A549 (cell line): ENCODE measurements at regions of chr17 and their contacts with region 1.

Region 1: GRCh38 chr17:46044286-46044928 is 45.4 kb downstream of the STH start:
- DNase-seq: peak; percentile 81 to 93
- ATAC-seq: peak; percentile 91 to 96
- H3K4me3 ChIP-seq: no peak overlapping the region
- H3K27ac ChIP-seq: peak overlapping the region; percentile 7 to 45; a peak in 3 of 6 replicates
- H3K4me1 ChIP-seq: peaks cover 23% of the 10 kb centered on the region
- CTCF ChIP-seq: peak; percentile 99
- EP300 ChIP-seq: no peak
- POLR2A ChIP-seq: no peak
- RAD21 ChIP-seq: peak; percentile 89 to 91

Region 2: GRCh38 chr17:45965812-45966211 is 78.6 kb before region 1 on chr17:
- CTCF ChIA-PET with region 1: no interaction called
- POLR2A ChIA-PET with region 1: no interaction called
- DNase-seq: no peak
- ATAC-seq: no peak
- H3K4me3 ChIP-seq: no peak overlapping the region
- H3K27ac ChIP-seq: no peak overlapping the region
- H3K4me1 ChIP-seq: no peaks in the 10 kb centered on the region
- CTCF ChIP-seq: no peak
- EP300 ChIP-seq: no peak
- POLR2A ChIP-seq: no peak
- RAD21 ChIP-seq: no peak

Region 3: GRCh38 chr17:46002311-46002972 is 42.0 kb before region 1 on chr17:
- CTCF ChIA-PET with region 1: interaction called, 27 read pairs
- POLR2A ChIA-PET with region 1: no interaction called
- DNase-seq: peak; percentile 69 to 78
- ATAC-seq: peak; percentile 89 to 91
- H3K4me3 ChIP-seq: no peak overlapping the region
- H3K27ac ChIP-seq: peak overlapping the region in 1 of 2 experiments; percentile 61; a peak in 3 of 6 replicates
- H3K4me1 ChIP-seq: peaks cover 15% of the 10 kb centered on the region
- CTCF ChIP-seq: peak; percentile 93
- EP300 ChIP-seq: no peak
- POLR2A ChIP-seq: no peak
- RAD21 ChIP-seq: peak; percentile 96 to 97

Region 4: DNA sequence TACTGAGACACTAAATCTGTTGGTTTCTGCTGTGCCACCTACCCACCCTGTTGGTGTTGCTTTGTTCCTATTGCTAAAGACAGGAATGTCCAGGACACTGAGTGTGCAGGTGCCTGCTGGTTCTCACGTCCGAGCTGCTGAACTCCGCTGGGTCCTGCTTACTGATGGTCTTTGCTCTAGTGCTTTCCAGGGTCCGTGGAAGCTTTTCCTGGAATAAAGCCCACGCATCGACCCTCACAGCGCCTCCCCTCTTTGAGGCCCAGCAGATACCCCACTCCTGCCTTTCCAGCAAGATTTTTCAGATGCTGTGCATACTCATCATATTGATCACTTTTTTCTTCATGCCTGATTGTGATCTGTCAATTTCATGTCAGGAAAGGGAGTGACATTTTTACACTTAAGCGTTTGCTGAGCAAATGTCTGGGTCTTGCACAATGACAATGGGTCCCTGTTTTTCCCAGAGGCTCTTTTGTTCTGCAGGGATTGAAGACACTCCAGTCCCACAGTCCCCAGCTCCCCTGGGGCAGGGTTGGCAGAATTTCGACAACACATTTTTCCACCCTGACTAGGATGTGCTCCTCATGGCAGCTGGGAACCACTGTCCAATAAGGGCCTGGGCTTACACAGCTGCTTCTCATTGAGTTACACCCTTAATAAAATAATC is 30.8 kb before region 1 on chr17:
- CTCF ChIA-PET with region 1: interaction called, 19 read pairs
- POLR2A ChIA-PET with region 1: no interaction called
- DNase-seq: no peak
- ATAC-seq: no peak
- H3K4me3 ChIP-seq: no peak overlapping the region
- H3K27ac ChIP-seq: no peak overlapping the region
- H3K4me1 ChIP-seq: peaks cover 8% of the 10 kb centered on the region; the same call in 2 of the 3 replicates
- CTCF ChIP-seq: no peak
- EP300 ChIP-seq: no peak
- POLR2A ChIP-seq: no peak
- RAD21 ChIP-seq: no peak

Region 5: DNA sequence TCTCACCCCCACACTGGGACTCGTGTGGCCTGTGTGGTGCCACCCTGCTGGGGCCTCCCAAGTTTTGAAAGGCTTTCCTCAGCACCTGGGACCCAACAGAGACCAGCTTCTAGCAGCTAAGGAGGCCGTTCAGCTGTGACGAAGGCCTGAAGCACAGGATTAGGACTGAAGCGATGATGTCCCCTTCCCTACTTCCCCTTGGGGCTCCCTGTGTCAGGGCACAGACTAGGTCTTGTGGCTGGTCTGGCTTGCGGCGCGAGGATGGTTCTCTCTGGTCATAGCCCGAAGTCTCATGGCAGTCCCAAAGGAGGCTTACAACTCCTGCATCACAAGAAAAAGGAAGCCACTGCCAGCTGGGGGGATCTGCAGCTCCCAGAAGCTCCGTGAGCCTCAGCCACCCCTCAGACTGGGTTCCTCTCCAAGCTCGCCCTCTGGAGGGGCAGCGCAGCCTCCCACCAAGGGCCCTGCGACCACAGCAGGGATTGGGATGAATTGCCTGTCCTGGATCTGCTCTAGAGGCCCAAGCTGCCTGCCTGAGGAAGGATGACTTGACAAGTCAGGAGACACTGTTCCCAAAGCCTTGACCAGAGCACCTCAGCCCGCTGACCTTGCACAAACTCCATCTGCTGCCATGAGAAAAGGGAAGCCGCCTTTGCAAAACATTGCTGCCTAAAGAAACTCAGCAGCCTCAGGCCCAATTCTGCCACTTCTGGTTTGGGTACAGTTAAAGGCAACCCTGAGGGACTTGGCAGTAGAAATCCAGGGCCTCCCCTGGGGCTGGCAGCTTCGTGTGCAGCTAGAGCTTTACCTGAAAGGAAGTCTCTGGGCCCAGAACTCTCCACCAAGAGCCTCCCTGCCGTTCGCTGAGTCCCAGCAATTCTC is 18.0 kb before region 1 on chr17:
- CTCF ChIA-PET with region 1: interaction called, 55 read pairs
- POLR2A ChIA-PET with region 1: no interaction called
- DNase-seq: no peak
- ATAC-seq: peak; percentile 14 to 21; a peak in 3 of 6 replicates
- H3K4me3 ChIP-seq: no peak overlapping the region
- H3K27ac ChIP-seq: no peak overlapping the region
- H3K4me1 ChIP-seq: no peaks in the 10 kb centered on the region
- CTCF ChIP-seq: no peak
- EP300 ChIP-seq: no peak
- POLR2A ChIP-seq: no peak
- RAD21 ChIP-seq: no peak

Region 6: DNA sequence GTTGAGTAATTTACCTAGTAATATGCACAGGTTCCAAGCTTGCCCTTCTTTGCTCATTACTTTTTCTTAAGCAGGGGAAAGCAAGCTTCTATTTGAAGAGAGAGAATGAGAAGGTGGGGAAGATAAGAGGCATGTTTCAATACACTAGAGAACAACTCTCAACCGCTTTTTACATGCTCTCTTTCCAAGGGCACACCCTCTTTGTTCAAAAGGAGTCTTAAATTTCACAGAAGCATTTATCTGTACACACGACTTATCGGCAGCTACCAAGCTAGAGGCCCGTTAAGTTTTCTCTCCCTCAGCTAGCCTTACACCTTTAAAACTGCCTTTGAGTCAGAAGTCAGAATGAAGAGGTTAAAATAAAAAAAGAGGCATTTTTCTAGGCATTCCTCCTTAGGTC is 34.3 kb after region 1 on chr17:
- CTCF ChIA-PET with region 1: interaction called, 15 read pairs
- POLR2A ChIA-PET with region 1: no interaction called
- DNase-seq: no peak
- ATAC-seq: no peak
- H3K4me3 ChIP-seq: no peak overlapping the region
- H3K27ac ChIP-seq: no peak overlapping the region
- H3K4me1 ChIP-seq: peaks cover 28% of the 10 kb centered on the region
- CTCF ChIP-seq: no peak
- EP300 ChIP-seq: no peak
- POLR2A ChIP-seq: no peak
- RAD21 ChIP-seq: no peak

Region 7: DNA sequence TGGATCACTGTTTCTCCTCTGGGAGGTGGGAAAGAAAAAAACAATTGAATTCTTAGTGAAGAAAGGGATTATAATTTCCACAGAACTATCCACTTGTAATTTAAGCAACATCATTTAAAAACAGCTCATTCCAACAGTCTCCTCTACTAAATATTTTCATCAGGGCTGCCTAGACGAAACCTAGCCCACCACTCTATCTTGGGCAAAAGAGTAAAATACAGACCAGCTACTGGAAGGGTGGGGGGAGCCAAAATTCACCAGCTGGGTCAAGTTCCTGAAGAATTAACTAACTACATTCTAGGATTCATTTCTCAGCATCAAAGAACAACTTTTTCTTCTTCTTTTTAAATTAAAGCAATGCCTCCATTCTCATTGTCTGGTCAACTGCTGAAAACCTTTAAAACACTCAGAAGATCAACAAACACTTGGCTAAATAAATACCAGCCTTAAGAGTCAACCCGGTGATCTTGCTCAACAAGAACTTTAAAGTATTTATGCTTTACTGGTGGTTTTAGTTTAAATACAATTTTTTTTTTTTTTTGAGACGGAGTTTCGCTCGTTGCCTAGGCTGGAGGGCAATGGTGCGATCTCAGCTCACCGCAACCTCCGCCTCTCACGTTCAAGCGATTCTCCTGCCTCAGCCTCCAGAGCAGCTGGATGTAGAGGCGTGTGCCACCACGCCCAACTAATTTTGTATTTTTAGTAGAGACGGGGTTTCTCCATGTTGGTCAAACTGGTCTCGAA is 123.6 kb after region 1 on chr17:
- CTCF ChIA-PET with region 1: interaction called, 12 read pairs
- POLR2A ChIA-PET with region 1: no interaction called
- DNase-seq: peak in 1 of 2 experiments; percentile 61
- ATAC-seq: peak in 1 of 2 experiments; percentile 64; a peak in 3 of 6 replicates
- H3K4me3 ChIP-seq: peak overlapping the region; percentile 6; the same call in 1 of the 3 replicates
- H3K27ac ChIP-seq: peak overlapping the region; percentile 47 to 51
- H3K4me1 ChIP-seq: peaks cover 54% of the 10 kb centered on the region
- CTCF ChIP-seq: no peak
- EP300 ChIP-seq: no peak
- POLR2A ChIP-seq: no peak
- RAD21 ChIP-seq: no peak

Region 8: DNA sequence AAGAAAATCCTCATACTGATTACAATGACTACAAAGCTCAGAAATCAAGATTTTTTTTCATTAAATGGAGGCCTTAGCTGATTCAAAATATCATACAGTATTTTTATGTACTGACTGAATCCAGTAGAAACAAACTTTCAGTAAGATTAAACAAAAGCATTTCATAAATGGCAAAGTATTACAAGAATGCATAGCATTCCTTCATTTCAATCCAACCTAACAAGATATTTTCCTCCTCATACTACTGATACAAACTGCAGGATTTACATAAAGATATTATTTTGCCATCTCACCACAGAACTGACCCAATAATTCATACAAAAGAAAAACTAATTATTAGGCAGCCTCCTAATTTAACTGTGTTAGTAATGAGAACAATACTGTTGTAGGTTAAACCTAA is 155.0 kb after region 1 on chr17:
- CTCF ChIA-PET with region 1: interaction called, 30 read pairs
- POLR2A ChIA-PET with region 1: no interaction called
- DNase-seq: no peak
- ATAC-seq: no peak
- H3K4me3 ChIP-seq: no peak overlapping the region
- H3K27ac ChIP-seq: no peak overlapping the region
- H3K4me1 ChIP-seq: peaks cover 54% of the 10 kb centered on the region
- CTCF ChIP-seq: no peak
- EP300 ChIP-seq: no peak
- POLR2A ChIP-seq: no peak
- RAD21 ChIP-seq: no peak